ENCODE measurements at regions of chr9 and their contacts with region 1.

Region 1: GRCh38 chr9:36166101-36166927 is 2.9 kb upstream of the CCIN start:
- DNase-seq: peak; percentile 81
- H3K4me3 Mint-ChIP-seq: peak overlapping the region; percentile 70
- H3K27ac Mint-ChIP-seq: no peak overlapping the region
- H3K4me1 Mint-ChIP-seq: peaks cover 3% of the 10 kb centered on the region
- H3K27me3 Mint-ChIP-seq: no peaks in the 10 kb centered on the region

Region 2: DNA sequence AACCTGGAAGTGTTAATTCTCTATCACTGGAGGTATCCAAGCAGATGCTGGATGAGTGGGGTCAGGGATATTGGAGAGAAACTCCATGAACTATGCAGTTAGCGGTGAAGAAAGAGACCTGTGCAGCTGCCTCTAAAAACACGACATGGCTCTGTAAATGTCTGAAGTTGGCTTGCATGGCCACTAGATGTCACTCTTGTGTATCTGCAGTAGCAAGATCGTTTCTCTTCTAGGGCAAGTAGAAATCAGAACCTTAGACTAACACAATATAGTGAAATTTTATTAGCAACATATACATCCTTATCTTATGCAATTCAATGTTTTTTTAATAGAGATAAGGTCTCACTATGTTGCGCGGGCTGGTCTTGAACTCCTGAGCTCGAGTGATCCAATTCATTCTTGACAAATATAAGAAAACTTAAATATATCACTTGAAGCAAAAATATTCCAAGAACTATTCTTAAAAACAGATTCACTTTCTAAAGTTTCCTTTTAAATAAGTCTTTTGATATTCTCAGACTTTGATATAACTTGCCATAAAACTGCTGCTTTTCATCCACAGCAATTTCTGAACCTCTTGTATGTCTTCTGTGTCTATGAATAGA is 211.3 kb before region 1 on chr9:
- CTCF ChIA-PET with region 1: interaction called, 4 read pairs
- intact Hi-C with region 1: loop called (anchors 1 kb)
- DNase-seq: peak; percentile 73
- H3K4me3 Mint-ChIP-seq: no peak overlapping the region
- H3K27ac Mint-ChIP-seq: no peak overlapping the region
- H3K4me1 Mint-ChIP-seq: no peaks in the 10 kb centered on the region
- H3K27me3 Mint-ChIP-seq: no peaks in the 10 kb centered on the region

Region 3: DNA sequence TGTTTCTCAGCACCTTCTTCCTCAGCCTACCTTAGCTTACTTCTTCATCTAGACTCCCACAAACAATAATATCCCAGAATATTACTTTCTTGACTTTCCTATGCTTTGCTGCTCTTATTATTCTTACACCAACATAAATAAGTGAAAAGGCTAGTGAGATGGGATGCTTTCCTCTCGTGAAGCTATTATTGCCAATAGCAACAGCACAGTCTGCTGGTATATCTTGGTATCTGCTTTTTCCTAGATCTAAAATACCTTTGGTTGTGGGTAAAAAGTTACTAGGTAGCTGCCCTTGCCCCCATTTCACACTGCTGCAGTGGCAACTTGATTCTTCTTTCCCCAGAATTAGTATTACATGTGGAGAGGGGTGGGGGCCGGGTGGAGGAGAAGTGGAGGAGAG is 55.9 kb before region 1 on chr9:
- CTCF ChIA-PET with region 1: interaction called, 283 read pairs
- intact Hi-C with region 1: no loop called
- DNase-seq: no peak
- H3K4me3 Mint-ChIP-seq: no peak overlapping the region
- H3K27ac Mint-ChIP-seq: no peak overlapping the region
- H3K4me1 Mint-ChIP-seq: peaks cover 10% of the 10 kb centered on the region
- H3K27me3 Mint-ChIP-seq: no peaks in the 10 kb centered on the region

Region 4: GRCh38 chr9:36136272-36136893 is 29.9 kb before region 1 on chr9 and contains the start of gene GLIPR2:
- CTCF ChIA-PET with region 1: interaction called, 19 read pairs
- intact Hi-C with region 1: loop called (anchors 1 kb)
- DNase-seq: peak; percentile 80
- H3K4me3 Mint-ChIP-seq: peak within 1 kb of the TSS; percentile 86
- H3K27ac Mint-ChIP-seq: no peak within 1 kb of the TSS
- H3K4me1 Mint-ChIP-seq: peaks cover 44% of the 10 kb centered on the region
- H3K27me3 Mint-ChIP-seq: no peaks in the 10 kb centered on the region
- total RNA-seq, gene GLIPR2: 8.0 to 9.7 TPM

Region 5: DNA sequence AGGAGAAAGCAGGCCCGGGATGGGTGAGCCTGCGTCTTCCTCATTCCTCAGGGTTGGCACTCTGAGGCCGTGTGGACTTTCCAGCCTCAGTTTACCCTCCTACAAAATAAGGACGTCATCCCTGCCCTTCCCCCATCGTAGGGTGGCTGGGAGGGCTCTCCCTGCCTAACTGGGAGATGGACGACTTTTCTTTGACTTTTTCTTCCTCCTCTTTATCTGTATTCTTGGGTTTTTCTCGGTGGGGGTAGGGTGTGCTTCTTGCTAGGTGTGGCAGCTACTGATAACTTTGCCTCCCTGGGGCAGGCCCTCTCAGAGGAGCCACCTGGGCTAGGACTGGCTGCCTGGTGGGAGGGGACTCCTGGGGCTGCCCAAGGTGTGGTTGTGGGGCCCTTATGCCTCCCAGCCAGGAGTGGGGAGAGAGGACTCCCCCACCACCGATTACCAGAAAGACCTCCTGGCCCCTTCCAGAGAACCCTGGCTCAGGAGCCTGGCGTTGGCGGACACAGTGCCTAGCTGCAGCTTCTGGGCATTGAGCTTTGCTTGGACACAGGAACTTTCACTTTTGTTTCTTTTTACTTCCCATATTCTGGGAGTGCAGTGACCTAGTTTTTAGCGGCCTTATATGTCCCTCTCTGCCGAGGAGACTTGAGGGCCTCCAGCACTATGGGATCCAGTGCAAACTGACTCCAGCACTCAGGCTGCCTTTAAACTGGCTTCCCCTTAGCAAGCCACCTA is 23.6 kb before region 1 on chr9:
- CTCF ChIA-PET with region 1: interaction called, 19 read pairs
- intact Hi-C with region 1: loop called (anchors 1 kb)
- DNase-seq: peak; percentile 36
- H3K4me3 Mint-ChIP-seq: peak overlapping the region; percentile 79
- H3K27ac Mint-ChIP-seq: peak overlapping the region; percentile 93
- H3K4me1 Mint-ChIP-seq: peaks cover 86% of the 10 kb centered on the region
- H3K27me3 Mint-ChIP-seq: no peaks in the 10 kb centered on the region

Region 6: GRCh38 chr9:36148311-36149051 is 17.8 kb before region 1 on chr9:
- CTCF ChIA-PET with region 1: interaction called, 10 read pairs
- intact Hi-C with region 1: no loop called
- DNase-seq: peak; percentile 69
- H3K4me3 Mint-ChIP-seq: no peak overlapping the region
- H3K27ac Mint-ChIP-seq: no peak overlapping the region
- H3K4me1 Mint-ChIP-seq: peaks cover 82% of the 10 kb centered on the region
- H3K27me3 Mint-ChIP-seq: no peaks in the 10 kb centered on the region

Region 7: GRCh38 chr9:36862206-36863145 is 696.2 kb after region 1 on chr9:
- CTCF ChIA-PET with region 1: no interaction called
- intact Hi-C with region 1: no loop called
- DNase-seq: peak; percentile 27
- H3K4me3 Mint-ChIP-seq: no peak overlapping the region
- H3K27ac Mint-ChIP-seq: no peak overlapping the region
- H3K4me1 Mint-ChIP-seq: no peaks in the 10 kb centered on the region
- H3K27me3 Mint-ChIP-seq: no peaks in the 10 kb centered on the region

Measured in activated naive CD4-positive, alpha-beta T cell treated with anti-CD3 and anti-CD28 coated beads for 36 hours (primary cell).